Sigmoid colon (tissue), 7 donors: ENCODE measurements at regions of chr6 and their contacts with region 1.

Region 1: GRCh38 chr6:131586543-131586942 is 13.5 kb downstream of the ARG1 start:
- DNase-seq: no peak
- H3K4me3 ChIP-seq: no peak overlapping the region
- H3K27ac ChIP-seq: no peak overlapping the region
- H3K4me1 ChIP-seq: no peaks in the 10 kb centered on the region
- H3K27me3 ChIP-seq: no peaks in the 10 kb centered on the region
- CTCF ChIP-seq: no peak
- EP300 ChIP-seq: no peak
- POLR2A ChIP-seq: no peak

Region 2: DNA sequence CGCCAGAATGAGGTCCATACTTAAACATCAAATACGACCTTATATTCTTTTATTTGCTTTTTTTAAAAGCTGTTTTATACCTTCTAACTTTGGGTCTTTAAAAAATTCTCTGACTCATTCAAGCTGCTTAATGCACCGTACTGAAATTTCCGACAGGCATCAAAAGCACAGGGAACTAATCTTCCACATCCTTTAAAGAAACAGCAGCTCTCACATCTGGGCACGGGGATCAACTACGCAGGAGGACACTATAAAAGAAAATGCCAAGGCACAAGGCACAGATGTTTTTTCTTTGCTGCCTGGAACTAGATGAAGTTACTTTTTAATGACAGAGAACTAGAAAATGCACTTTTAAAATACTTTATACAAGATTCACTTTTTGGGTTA is 125.9 kb before region 1 on chr6:
- intact Hi-C with region 1: no loop called
- DNase-seq: no peak
- H3K4me3 ChIP-seq: no peak overlapping the region
- H3K27ac ChIP-seq: no peak overlapping the region
- H3K4me1 ChIP-seq: peaks cover 0 to 4% (median 0%) of the 10 kb centered on the region in 4 donors
- H3K27me3 ChIP-seq: no peaks in the 10 kb centered on the region
- CTCF ChIP-seq: no peak
- EP300 ChIP-seq: no peak
- POLR2A ChIP-seq: no peak

Region 3: DNA sequence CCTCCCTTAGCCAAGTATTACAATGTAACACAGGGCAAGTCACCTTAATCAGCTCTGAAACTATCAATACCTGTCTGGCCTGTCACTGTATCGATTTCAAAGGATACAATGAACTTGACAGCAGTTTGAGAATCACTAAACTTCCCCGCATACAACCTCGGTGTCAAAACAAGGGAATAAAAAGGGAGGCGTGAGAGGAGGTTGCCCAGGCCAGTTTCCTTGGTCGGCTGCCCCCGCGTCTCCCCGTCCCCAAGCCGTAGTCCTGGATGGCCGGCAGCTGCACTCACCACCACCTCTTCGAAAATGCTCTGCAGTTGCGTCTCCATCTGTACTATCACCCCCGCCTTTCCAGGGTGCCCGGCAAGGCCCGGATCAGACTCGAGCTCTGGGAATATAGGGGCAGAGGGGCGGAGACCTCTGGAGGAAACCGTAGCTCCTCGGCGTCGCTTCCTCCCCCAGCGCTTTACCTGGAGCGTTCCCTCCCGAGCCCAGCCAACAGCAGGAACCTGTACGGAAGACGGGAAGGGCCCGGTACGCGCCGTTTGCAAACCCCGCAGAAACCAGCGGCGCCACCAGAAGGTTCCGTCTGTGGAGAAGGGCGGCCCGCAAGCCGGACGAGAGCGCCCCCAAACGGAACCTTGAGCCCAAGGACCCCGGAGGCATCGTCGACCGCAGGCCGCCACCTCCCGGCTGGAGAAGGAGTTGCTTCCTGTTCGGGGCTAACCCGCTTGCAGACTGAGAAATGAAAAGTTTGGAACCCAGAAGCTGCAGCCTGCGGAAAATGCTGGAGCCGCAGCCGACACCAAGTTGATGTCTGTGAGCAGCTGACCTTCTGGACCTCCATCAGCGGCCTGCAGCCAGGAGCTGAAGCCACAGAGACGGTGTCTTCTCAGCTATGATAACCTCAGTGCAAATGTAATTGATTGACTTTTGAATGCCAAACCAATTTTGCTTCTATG is 41.5 kb after region 1 on chr6 and contains the start of gene MED23:
- intact Hi-C with region 1: loop called (anchors 5 kb)
- DNase-seq: peak; percentile 96
- H3K4me3 ChIP-seq: peak within 1 kb of the TSS; percentile 65 to 80 (median 72)
- H3K27ac ChIP-seq: peak within 1 kb of the TSS; percentile 74 to 81 (median 78)
- H3K4me1 ChIP-seq: peaks cover 0 to 36% (median 27%) of the 10 kb centered on the region in 4 donors
- H3K27me3 ChIP-seq: no peaks in the 10 kb centered on the region
- CTCF ChIP-seq: peak; percentile 78 to 91 (median 86)
- EP300 ChIP-seq: no peak
- POLR2A ChIP-seq: peak; percentile 30 to 61
- total RNA-seq, gene MED23: 19.0 to 29.6 (median 25.0) TPM

Region 4: GRCh38 chr6:132843316-132844043 is 1256.9 kb after region 1 on chr6:
- intact Hi-C with region 1: no loop called
- DNase-seq: no peak
- H3K4me3 ChIP-seq: no peak overlapping the region
- H3K27ac ChIP-seq: no peak overlapping the region
- H3K4me1 ChIP-seq: no peaks in the 10 kb centered on the region
- H3K27me3 ChIP-seq: no peaks in the 10 kb centered on the region
- CTCF ChIP-seq: no peak
- EP300 ChIP-seq: no peak
- POLR2A ChIP-seq: no peak